ENCODE measurements at regions of chr9 and their contacts with region 1.

Region 1: DNA sequence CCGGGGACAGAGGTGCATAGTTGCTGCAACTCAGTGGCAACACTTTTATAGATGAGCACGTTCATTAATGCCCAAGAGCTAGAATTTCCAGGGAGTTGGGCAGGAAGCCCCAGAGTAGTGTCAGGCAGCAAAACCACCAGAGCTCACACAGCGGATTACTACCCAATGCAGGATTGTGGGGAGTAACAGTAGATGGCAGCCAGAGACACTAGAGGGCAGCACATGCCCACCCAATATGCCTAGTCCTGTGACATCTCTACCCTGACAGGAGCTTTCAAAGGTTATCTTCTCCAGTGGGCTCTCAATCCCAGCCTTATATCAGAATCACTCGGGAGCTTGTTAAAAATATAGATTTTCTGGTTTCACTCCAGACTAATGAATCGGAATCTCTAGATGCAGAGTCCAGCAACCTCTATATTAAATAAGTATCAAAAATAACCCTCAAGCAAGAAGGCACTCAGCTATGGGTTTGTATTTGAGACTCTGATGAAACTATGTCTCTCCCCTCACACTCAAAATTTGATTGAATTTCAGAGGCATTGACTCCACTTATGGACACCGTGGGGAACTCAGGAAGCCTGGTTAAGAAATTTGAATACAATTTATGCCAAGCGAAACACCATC is 58.4 kb upstream of the PHF24 start:
- DNase-seq: peak; percentile 90
- ATAC-seq: peak; percentile 100
- H3K4me3 Mint-ChIP-seq: no peak overlapping the region
- H3K27ac Mint-ChIP-seq: no peak overlapping the region
- H3K4me1 Mint-ChIP-seq: no peaks in the 10 kb centered on the region
- H3K27me3 Mint-ChIP-seq: peaks cover 30% of the 10 kb centered on the region
- CTCF ChIP-seq: peak; percentile 76

Region 2: GRCh38 chr9:34929506-34930102 is 30.0 kb after region 1 on chr9:
- CTCF ChIA-PET with region 1: interaction called, 10 read pairs
- POLR2A ChIA-PET with region 1: no interaction called
- intact Hi-C with region 1: no loop called
- DNase-seq: peak; percentile 71
- ATAC-seq: peak; percentile 74
- H3K4me3 Mint-ChIP-seq: no peak overlapping the region
- H3K27ac Mint-ChIP-seq: no peak overlapping the region
- H3K4me1 Mint-ChIP-seq: peaks cover 13% of the 10 kb centered on the region
- H3K27me3 Mint-ChIP-seq: peaks cover 25% of the 10 kb centered on the region
- CTCF ChIP-seq: peak; percentile 65

Region 3: GRCh38 chr9:34989003-34989945 is 89.6 kb after region 1 on chr9 and contains the start of gene DNAJB5:
- CTCF ChIA-PET with region 1: interaction called, 120 read pairs
- POLR2A ChIA-PET with region 1: interaction called, 7 read pairs
- intact Hi-C with region 1: loop called (anchors 1 kb)
- DNase-seq: peak; percentile 98
- ATAC-seq: peak; percentile 85
- H3K4me3 Mint-ChIP-seq: peak within 1 kb of the TSS; percentile 80
- H3K27ac Mint-ChIP-seq: peak within 1 kb of the TSS; percentile 91
- H3K4me1 Mint-ChIP-seq: peaks cover 72% of the 10 kb centered on the region
- H3K27me3 Mint-ChIP-seq: no peaks in the 10 kb centered on the region
- CTCF ChIP-seq: no peak
- total RNA-seq, gene DNAJB5: 14.6 to 16.4 TPM

Region 4: DNA sequence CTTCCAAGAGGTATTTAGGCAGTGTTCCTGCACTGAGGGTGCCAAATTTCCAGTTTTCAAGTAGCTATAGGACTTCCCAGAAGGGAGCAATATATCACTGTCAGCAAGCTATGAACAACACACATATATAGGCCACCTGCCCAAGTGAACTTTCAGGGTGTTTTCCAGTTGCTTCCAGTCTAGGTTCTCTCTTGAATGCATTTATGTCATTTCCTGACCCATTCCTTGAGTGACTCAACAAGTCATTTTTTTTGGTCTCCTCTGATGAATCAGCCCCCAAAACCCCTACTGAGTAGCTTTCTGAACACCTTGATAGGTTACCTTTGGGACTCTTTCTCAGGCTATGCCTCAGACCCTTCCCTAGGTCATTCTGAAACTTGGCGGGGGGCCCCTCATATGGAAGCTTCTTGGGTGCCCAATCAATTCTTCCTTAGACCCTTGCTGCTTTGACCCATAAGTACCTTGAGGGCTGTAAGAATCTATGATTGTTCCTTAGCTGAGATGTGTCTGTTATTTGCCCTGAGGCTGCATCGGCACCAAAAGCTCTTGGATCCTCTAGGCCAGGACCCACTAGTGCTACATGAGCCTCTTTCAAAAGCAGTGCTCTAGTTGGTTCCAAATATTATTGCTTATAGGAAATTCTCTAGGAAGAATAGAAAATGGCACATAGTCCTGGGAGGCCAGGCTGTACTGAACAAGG is 102.3 kb after region 1 on chr9:
- CTCF ChIA-PET with region 1: interaction called, 11 read pairs
- POLR2A ChIA-PET with region 1: no interaction called
- intact Hi-C with region 1: no loop called
- DNase-seq: peak; percentile 28
- ATAC-seq: peak; percentile 85
- H3K4me3 Mint-ChIP-seq: no peak overlapping the region
- H3K27ac Mint-ChIP-seq: peak overlapping the region; percentile 58
- H3K4me1 Mint-ChIP-seq: peaks cover 34% of the 10 kb centered on the region
- H3K27me3 Mint-ChIP-seq: no peaks in the 10 kb centered on the region
- CTCF ChIP-seq: no peak

Region 5: DNA sequence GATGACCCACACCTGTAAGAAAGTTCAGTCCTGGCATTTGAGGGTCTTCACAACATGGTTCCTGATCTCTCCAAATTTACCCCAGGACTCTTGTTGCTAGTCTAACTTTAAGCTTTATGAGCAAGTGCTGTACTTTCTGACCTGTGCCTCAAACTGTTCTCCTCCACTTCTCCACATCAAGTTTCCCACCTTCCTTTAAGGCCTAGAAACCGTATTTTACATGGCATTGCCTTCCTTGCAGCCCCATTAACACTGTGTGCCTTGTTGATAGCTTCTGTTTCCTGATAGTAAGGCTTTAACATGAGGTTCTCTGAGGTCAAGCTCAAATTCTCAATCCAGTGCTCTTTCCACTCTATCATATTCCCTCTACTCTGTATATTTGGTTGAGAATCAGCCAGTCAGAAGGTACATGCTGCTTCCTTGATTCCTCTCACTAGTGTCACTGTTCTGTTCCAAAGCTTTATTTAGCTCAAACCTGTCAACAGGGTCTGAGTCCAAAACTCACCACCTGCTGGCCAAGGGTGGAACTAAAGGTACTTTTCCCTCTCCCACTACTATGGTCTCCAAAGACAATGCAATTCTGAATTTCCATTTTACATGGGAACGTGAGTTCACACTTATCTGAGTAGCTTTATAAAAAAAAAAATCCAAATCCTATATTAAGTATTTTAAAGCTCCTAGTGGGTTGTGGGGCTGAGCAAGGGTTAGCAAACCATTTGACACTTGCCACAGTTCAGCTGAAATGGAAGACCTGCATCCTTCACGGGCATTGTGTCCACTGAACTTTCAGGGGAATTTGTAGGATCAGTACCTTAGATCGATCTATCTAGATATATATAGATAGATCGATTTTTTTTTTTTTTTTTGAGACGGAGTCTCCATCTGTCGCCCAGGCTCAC is 151.7 kb after region 1 on chr9:
- CTCF ChIA-PET with region 1: interaction called, 115 read pairs
- POLR2A ChIA-PET with region 1: interaction called, 9 read pairs
- intact Hi-C with region 1: loop called (anchors 1 kb)
- DNase-seq: peak; percentile 73
- ATAC-seq: peak; percentile 80
- H3K4me3 Mint-ChIP-seq: no peak overlapping the region
- H3K27ac Mint-ChIP-seq: peak overlapping the region; percentile 49
- H3K4me1 Mint-ChIP-seq: no peaks in the 10 kb centered on the region
- H3K27me3 Mint-ChIP-seq: no peaks in the 10 kb centered on the region
- CTCF ChIP-seq: peak; percentile 79

Region 6: DNA sequence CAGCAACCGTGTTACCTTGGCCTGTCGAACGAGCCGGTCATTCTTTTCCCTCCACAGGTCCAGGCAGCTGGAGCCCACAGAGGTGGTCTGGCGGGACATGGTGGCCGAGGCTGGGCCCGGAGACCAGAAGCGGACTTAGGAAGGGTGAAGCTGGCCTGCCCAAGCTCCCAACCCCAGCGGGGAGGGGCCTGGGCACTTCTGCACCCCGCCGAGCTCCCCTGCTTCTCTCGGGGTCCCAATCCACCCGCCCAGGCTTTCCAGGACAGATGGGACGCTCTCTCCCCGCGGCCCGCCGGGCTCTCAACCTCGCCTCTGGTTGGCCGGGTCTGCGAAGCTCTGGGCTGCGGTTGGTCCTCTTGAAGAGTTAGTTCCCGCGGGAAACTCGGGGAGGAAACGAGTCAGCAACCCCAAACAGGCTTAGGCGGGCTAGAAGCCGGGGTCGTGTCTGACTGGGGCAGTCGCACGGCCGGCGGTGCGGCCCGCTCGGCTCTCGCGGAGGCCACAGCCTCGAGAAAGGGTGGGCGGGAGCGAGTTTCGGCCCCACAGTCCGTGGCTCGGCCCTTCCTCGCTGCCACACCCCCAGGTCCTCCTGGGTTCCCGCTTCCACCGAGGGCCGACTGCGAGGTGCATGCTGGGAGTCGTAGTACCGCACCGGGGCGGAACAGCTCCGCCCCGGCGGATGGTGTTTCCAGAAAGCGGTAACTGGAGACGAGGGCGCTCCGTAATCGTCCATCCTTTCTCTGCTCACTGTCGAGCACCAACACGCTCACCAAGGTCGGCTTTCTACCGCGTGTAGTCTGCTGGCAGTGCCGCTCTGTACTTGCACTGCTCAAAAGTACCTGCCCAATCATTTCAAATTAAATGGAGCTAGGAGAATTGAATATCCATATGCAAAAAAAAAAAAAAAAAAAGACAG is 180.0 kb after region 1 on chr9 and contains the start of gene FANCG:
- CTCF ChIA-PET with region 1: interaction called, 14 read pairs
- POLR2A ChIA-PET with region 1: no interaction called
- intact Hi-C with region 1: no loop called
- DNase-seq: peak; percentile 91
- ATAC-seq: peak; percentile 90
- H3K4me3 Mint-ChIP-seq: peak within 1 kb of the TSS; percentile 90
- H3K27ac Mint-ChIP-seq: peak within 1 kb of the TSS; percentile 97
- H3K4me1 Mint-ChIP-seq: peaks cover 21% of the 10 kb centered on the region
- H3K27me3 Mint-ChIP-seq: no peaks in the 10 kb centered on the region
- CTCF ChIP-seq: no peak
- total RNA-seq, gene FANCG: 91.5 to 94.0 TPM

Region 7: DNA sequence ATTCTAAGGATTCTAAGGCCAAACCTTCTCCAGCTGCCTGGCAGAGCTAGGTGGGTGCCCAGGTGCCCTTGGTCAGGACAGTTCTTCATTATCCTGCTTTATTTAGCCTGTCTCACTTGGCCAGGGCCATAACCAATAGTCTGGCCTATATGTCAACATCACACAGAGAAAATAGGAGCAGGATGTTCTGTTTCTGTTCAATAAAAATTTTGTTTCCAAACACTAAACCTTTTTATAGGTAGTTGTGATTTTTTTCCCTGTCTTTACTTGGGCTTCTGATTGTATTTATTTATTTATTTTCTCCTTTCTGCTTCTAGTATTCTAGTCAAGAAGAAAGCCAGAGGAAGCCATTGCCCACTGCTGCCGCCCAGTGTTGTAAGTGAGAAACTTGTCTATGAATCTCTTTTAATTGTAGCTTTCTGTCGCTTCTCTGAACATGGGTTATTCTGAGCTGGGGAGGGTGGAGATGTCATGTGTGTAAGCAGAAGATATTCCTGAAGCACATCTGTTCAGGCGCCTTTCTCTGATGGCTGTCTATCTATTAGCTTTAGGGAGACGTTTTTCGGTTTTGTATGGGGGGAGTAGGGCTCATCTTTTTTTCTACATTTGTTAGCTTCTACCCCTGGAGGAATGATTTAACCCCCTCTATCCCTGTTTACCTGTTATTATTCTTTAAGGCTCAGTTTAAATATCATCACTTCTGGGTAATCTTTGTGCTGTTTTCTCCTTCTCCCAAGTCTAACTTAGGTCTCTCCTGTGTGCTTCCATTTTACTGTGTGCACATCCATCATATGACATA is 359.2 kb after region 1 on chr9:
- CTCF ChIA-PET with region 1: interaction called, 10 read pairs
- POLR2A ChIA-PET with region 1: no interaction called
- intact Hi-C with region 1: no loop called
- DNase-seq: peak; percentile 67
- ATAC-seq: peak; percentile 45
- H3K4me3 Mint-ChIP-seq: no peak overlapping the region
- H3K27ac Mint-ChIP-seq: no peak overlapping the region
- H3K4me1 Mint-ChIP-seq: no peaks in the 10 kb centered on the region
- H3K27me3 Mint-ChIP-seq: peaks cover under 1% of the 10 kb centered on the region
- CTCF ChIP-seq: peak; percentile 63

Measured in activated CD8-positive, alpha-beta T cell treated with anti-CD3 and anti-CD28 coated beads for 36 hours (primary cell).